AG04450 (cell line): ENCODE measurements at regions of chr16 and their contacts with region 1.

Region 1: GRCh38 chr16:14341324-14342225 is 270.5 kb downstream of the MRTFB start:
- DNase-seq: no peak
- H3K4me3 ChIP-seq: no peak overlapping the region
- H3K27ac ChIP-seq: no peak overlapping the region
- H3K27me3 ChIP-seq: no peaks in the 10 kb centered on the region
- CTCF ChIP-seq: no peak

Region 2: GRCh38 chr16:14155572-14156205 is 185.9 kb before region 1 on chr16:
- CTCF ChIA-PET with region 1: no interaction called
- POLR2A ChIA-PET with region 1: no interaction called
- DNase-seq: no peak
- H3K4me3 ChIP-seq: no peak overlapping the region
- H3K27ac ChIP-seq: no peak overlapping the region
- H3K27me3 ChIP-seq: no peaks in the 10 kb centered on the region
- CTCF ChIP-seq: no peak

Region 3: GRCh38 chr16:14202697-14203096 is 138.9 kb before region 1 on chr16:
- CTCF ChIA-PET with region 1: interaction called, 13 read pairs
- POLR2A ChIA-PET with region 1: no interaction called
- DNase-seq: no peak
- H3K4me3 ChIP-seq: no peak overlapping the region
- H3K27ac ChIP-seq: no peak overlapping the region
- H3K27me3 ChIP-seq: no peaks in the 10 kb centered on the region
- CTCF ChIP-seq: peak; percentile 39

Region 4: DNA sequence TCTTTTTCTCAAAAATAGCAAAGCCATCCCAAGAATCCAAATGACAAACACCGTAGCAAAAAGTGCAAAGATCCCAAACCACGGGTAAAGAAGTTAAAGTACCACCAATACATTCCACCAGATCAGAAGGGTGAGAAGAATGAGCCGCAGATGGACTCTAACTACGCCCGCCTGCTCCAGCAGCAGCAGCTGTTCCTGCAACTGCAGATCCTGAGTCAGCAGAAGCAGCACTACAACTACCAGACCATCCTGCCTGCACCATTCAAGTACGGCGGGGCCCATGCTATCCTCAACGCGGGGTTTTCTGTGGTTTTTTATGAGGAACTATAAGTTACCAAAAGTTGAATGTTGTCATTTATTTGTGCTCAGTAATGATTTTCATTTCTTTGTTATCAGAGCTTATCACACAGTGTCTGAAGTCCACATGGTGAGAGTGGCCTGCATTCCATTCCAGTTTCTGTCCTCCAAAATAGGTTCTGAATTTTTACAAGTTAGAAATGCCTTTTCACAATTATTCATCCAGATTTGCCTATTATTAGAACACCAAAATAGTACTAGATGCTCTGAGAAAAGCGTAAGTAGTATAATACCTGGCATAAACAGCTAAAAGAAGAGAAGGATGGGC is 101.2 kb before region 1 on chr16:
- CTCF ChIA-PET with region 1: no interaction called
- POLR2A ChIA-PET with region 1: no interaction called
- DNase-seq: no peak
- H3K4me3 ChIP-seq: no peak overlapping the region
- H3K27ac ChIP-seq: no peak overlapping the region
- H3K27me3 ChIP-seq: no peaks in the 10 kb centered on the region
- CTCF ChIP-seq: no peak

Region 5: DNA sequence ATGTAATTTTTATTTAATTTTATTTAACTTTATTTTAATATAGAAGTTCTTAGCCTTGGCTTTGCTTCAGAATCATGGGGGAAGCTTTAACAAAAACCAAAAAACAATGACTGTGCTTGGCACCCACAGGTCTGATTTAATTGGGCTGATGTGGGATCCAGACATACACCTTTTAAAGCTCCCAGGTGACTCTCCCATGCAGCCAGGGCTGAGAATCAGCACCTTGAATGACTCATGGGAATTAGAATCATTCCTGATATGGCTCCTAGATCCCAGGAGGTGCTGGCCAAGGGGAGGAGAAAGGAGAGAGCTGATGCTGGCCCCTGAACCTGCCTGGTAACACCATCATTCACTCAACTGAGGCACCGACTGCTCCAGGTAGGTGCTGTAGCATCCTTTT is 47.8 kb after region 1 on chr16:
- CTCF ChIA-PET with region 1: no interaction called
- POLR2A ChIA-PET with region 1: no interaction called
- DNase-seq: no peak
- H3K4me3 ChIP-seq: no peak overlapping the region
- H3K27ac ChIP-seq: no peak overlapping the region
- H3K27me3 ChIP-seq: peaks cover 5% of the 10 kb centered on the region
- CTCF ChIP-seq: no peak